ENCODE measurements at regions of chr5 and their contacts with region 1.

Region 1: DNA sequence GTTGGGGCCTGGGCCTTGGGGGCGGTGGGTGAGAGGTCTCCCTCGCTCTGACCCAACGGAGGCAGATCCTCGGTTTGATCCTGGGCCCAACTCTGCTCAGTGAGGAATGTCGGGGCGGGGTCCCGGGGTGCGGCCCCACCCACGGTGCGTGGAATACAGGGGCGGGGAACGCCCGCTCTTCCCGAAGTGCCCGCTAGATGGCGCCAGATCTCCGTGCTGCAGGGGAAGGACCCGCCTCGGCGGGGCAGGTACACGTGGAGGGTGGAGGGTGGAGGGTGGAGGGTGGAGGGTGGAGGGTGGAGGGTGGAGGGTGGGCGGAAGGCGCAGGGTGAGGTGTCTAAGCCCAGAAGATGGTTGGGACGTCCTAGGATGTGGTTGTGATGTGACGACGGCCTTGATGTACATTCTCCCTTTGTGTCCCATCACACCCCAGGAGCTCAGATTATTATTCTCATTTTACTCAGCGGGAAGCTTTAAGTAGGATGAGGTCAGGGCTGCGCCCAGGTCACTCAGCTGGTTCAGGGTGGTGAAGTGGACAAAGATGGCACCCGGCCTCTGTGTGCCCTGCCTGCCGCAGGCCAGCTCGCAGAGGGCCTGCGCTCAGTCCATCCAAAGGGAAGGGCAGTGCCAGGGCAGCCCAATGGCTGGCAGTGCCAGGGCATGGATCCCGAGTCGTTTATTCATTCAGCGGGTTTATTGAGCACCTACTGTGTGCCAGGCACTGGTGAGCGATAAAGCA is 9.4 kb upstream of the RPS14 start:
- DNase-seq: no peak
- ATAC-seq: peak; percentile 91
- H3K4me3 ChIP-seq: peak overlapping the region; percentile 39; the same call in 1 of the 2 replicates
- H3K27ac ChIP-seq: no peak overlapping the region
- H3K4me1 ChIP-seq: peaks cover 35% of the 10 kb centered on the region
- H3K27me3 ChIP-seq: no peaks in the 10 kb centered on the region
- CTCF ChIP-seq: peak; percentile 62 to 93 (median 84)
- EP300 ChIP-seq: no peak
- POLR2A ChIP-seq: no peak
- RAD21 ChIP-seq: peak; percentile 92

Region 2: GRCh38 chr5:150473673-150474358 is 14.8 kb after region 1 on chr5:
- CTCF ChIA-PET with region 1: interaction called, 21 read pairs
- POLR2A ChIA-PET with region 1: no interaction called
- RAD21 ChIA-PET with region 1: interaction called, 8 read pairs
- SMC1A ChIA-PET with region 1: interaction called, 7 read pairs
- in situ Hi-C with region 1: no loop called
- intact Hi-C with region 1: no loop called
- DNase-seq: no peak
- ATAC-seq: no peak
- H3K4me3 ChIP-seq: no peak overlapping the region
- H3K27ac ChIP-seq: no peak overlapping the region
- H3K4me1 ChIP-seq: peaks cover 21% of the 10 kb centered on the region
- H3K27me3 ChIP-seq: no peaks in the 10 kb centered on the region
- CTCF ChIP-seq: no peak
- EP300 ChIP-seq: no peak
- POLR2A ChIP-seq: no peak
- RAD21 ChIP-seq: no peak

Region 3: GRCh38 chr5:150523472-150524350 is 64.7 kb after region 1 on chr5:
- CTCF ChIA-PET with region 1: interaction called, 83 read pairs
- POLR2A ChIA-PET with region 1: no interaction called
- RAD21 ChIA-PET with region 1: interaction called, 6 read pairs
- SMC1A ChIA-PET with region 1: interaction called, 6 read pairs
- in situ Hi-C with region 1: no loop called
- intact Hi-C with region 1: loop called (anchors 1 kb)
- DNase-seq: no peak
- ATAC-seq: peak; percentile 88
- H3K4me3 ChIP-seq: no peak overlapping the region
- H3K27ac ChIP-seq: no peak overlapping the region
- H3K4me1 ChIP-seq: no peaks in the 10 kb centered on the region
- H3K27me3 ChIP-seq: no peaks in the 10 kb centered on the region
- CTCF ChIP-seq: peak; percentile 56 to 62 (median 60)
- EP300 ChIP-seq: no peak
- POLR2A ChIP-seq: no peak
- RAD21 ChIP-seq: peak; percentile 61

Region 4: DNA sequence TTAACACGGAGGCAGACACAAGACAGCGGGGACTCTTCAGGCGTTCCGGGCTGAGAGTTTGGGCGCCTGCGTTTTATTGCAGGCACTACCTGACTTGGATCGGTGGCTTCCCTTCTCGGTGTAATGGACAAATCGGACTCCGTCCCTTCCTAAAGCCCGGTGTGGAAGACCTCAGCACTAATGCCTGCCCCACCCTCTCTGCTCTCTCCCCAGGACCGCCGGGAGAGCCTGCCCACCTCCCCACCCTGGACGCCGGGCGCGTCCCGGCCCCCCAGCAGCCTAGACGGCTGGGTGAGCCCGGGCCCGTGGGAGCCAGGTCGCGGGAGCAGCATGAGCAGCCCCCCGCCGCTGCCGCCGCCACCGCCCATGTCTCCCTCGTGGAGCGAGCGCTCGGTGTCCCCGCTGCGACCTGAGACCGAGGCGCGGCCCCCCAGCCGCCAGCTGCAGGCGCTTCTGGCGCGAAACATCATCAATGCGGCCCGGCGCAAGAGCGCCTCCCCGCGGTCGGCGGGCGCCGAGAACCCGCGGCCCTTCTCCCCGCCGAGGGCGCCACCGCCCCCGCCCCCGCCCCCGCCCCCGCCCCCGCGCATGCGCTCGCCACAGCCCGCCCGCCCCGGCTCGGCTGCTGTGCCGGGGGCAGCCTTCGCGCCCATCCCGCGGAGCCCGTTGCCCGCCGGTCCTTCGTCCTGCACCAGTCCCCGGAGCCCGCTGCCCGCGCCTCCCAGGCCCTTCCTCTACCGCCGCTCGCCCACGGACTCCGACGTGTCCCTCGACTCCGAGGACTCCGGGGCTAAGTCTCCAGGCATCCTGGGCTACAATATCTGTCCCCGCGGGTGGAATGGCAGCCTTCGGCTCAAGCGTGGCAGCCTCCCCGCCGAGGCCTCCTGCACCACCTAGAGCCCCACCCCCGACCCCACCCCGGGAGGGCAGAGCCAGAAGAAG is 197.5 kb after region 1 on chr5:
- CTCF ChIA-PET with region 1: interaction called, 13 read pairs
- POLR2A ChIA-PET with region 1: no interaction called
- RAD21 ChIA-PET with region 1: interaction called, 6 read pairs
- SMC1A ChIA-PET with region 1: interaction called, 6 read pairs
- in situ Hi-C with region 1: loop called (anchors 10 kb)
- intact Hi-C with region 1: loop called (anchors 10 kb)
- DNase-seq: peak; percentile 11
- ATAC-seq: peak; percentile 84
- H3K4me3 ChIP-seq: peak overlapping the region; percentile 70; the same call in 1 of the 2 replicates
- H3K27ac ChIP-seq: no peak overlapping the region
- H3K4me1 ChIP-seq: peaks cover 7% of the 10 kb centered on the region
- H3K27me3 ChIP-seq: no peaks in the 10 kb centered on the region; a peak in 2 of 4 replicates
- CTCF ChIP-seq: peak; percentile 43 to 78 (median 75); a peak in 5 of 6 replicates
- EP300 ChIP-seq: no peak
- POLR2A ChIP-seq: peak; percentile 60
- RAD21 ChIP-seq: peak; percentile 76

Region 5: GRCh38 chr5:150846654-150847333 is 387.8 kb after region 1 on chr5:
- CTCF ChIA-PET with region 1: interaction called, 30 read pairs
- POLR2A ChIA-PET with region 1: interaction called, 4 read pairs
- RAD21 ChIA-PET with region 1: interaction called, 9 read pairs
- SMC1A ChIA-PET with region 1: interaction called, 12 read pairs
- in situ Hi-C with region 1: loop called (anchors 5 kb)
- intact Hi-C with region 1: loop called (anchors 5 kb)
- DNase-seq: peak; percentile 67
- ATAC-seq: peak; percentile 97
- H3K4me3 ChIP-seq: peak overlapping the region; percentile 32; the same call in 1 of the 2 replicates
- H3K27ac ChIP-seq: no peak overlapping the region
- H3K4me1 ChIP-seq: peaks cover 7% of the 10 kb centered on the region
- H3K27me3 ChIP-seq: no peaks in the 10 kb centered on the region
- CTCF ChIP-seq: peak; percentile 49 to 92 (median 72); a peak in 5 of 6 replicates
- EP300 ChIP-seq: peak in 1 of 2 experiments; percentile 38; a peak in 1 of 4 replicates
- POLR2A ChIP-seq: no peak
- RAD21 ChIP-seq: peak; percentile 95

Measured in GM12878 (cell line).